Activated naive CD4-positive, alpha-beta T cell treated with anti-CD3 and anti-CD28 coated beads for 36 hours (primary cell): ENCODE measurements at regions of chr11 and their contacts with region 1.

Region 1: DNA sequence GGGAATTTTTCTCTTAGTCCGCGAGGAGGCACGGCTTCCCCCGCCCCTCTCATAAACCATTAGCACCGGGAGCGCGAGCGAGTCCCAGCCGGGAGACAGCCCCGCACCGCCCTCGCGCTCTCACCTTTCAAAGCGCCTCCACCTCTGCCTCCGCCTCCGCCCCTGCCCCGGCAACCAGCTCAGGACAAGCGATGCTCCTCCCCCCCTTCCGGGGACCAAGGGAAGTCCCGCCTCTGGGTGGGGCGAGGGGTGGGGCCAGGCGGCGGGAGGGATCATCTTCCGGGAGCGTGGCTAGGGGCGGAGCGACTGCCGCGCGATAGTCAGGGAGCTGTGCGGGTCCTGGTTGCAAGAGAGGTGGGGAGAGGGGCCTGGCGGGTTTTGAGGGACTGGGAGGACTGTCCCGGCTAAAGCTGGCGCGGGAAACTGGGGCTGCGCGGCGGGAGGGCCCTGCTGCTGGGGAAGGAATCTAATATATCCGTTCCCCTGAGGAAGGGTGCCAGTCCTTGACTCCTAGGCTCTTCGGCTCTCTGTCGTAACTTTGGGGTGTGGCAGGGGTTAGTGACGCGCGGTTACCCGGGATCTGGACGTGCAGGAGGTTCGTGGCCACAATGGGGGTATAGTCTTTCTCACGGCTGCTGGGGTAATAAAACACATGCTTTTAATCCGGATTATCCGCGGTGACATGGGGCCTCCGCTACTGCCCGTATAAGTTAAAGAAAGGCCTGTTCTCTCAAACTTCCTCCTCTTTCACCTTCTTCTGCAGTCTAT is at the starts of genes CCDC82 and JRKL:
- DNase-seq: peak; percentile 99
- H3K4me3 Mint-ChIP-seq: peak within 1 kb of the TSS; percentile 89
- H3K27ac Mint-ChIP-seq: peak within 1 kb of the TSS; percentile 91
- H3K4me1 Mint-ChIP-seq: peaks cover 58% of the 10 kb centered on the region
- H3K27me3 Mint-ChIP-seq: no peaks in the 10 kb centered on the region
- total RNA-seq, gene CCDC82: 32.0 to 34.0 TPM
- total RNA-seq, gene JRKL: 12.3 to 12.7 TPM

Region 2: GRCh38 chr11:95790123-95790932 is 599.6 kb before region 1 on chr11 and contains the start of gene CEP57:
- CTCF ChIA-PET with region 1: interaction called, 8 read pairs
- intact Hi-C with region 1: loop called (anchors 1 kb)
- DNase-seq: peak; percentile 98
- H3K4me3 Mint-ChIP-seq: peak within 1 kb of the TSS; percentile 99
- H3K27ac Mint-ChIP-seq: peak within 1 kb of the TSS; percentile 100
- H3K4me1 Mint-ChIP-seq: peaks cover 56% of the 10 kb centered on the region
- H3K27me3 Mint-ChIP-seq: no peaks in the 10 kb centered on the region
- total RNA-seq, gene CEP57: 110 to 115 TPM

Region 3: DNA sequence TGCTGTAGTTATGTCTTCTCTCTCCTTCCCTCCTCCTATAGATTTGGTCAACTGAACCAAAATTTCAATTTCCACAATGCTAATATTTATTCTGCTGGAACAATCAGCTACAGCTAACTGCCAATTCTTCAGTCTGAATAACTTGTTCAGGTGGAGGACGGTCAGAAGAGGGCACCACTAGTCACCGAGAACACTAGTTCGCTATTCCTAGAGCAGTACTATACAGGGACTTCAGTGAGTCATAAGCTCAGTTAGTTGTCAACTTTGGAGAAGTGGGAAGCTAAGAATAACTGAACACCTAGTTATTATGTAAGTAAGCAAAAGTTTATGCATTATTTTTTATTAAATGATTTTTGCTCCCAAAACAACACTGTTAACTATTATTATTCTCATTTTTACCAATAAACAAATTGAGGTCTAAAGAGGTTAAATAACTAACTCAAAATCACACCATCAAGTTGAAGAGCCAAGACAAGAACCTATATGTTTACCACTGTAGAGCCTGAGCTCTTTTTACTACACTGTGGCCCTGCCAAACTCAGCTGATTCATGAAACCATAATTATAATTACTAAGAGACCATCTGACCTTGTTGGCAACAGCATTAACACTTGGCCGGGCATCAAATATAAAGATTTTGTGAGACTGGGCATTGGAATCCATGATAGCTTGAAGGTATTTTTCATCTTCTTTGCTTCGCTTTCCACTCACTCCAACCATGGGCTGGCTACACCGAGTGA is 540.6 kb before region 1 on chr11:
- CTCF ChIA-PET with region 1: interaction called, 15 read pairs
- intact Hi-C with region 1: loop called (anchors 1 kb)
- DNase-seq: peak; percentile 65
- H3K4me3 Mint-ChIP-seq: no peak overlapping the region
- H3K27ac Mint-ChIP-seq: no peak overlapping the region
- H3K4me1 Mint-ChIP-seq: no peaks in the 10 kb centered on the region
- H3K27me3 Mint-ChIP-seq: no peaks in the 10 kb centered on the region

Region 4: GRCh38 chr11:96012086-96012824 is 377.6 kb before region 1 on chr11:
- CTCF ChIA-PET with region 1: interaction called, 4 read pairs
- intact Hi-C with region 1: loop called (anchors 1 kb)
- DNase-seq: peak; percentile 67
- H3K4me3 Mint-ChIP-seq: peak overlapping the region; percentile 52
- H3K27ac Mint-ChIP-seq: peak overlapping the region; percentile 72
- H3K4me1 Mint-ChIP-seq: peaks cover 69% of the 10 kb centered on the region
- H3K27me3 Mint-ChIP-seq: no peaks in the 10 kb centered on the region

Region 5: DNA sequence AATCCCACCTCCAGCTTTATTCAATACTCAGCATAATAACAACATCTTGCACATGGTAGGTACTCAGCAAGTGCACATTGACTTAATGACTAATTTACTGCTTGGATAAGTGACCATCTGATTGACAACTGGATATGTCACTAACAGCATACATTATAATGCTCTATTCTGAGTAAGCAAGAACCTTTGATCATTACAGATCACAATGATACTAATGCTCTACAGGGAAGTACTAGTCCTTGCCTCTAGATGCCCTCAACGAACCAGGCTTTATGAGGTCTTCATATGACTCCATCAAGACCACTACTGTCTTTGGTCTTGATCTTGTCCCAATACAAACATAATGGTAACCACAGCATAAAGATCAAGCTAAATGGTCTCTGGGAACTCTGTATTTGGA is 298.4 kb before region 1 on chr11:
- CTCF ChIA-PET with region 1: interaction called, 9 read pairs
- intact Hi-C with region 1: loop called (anchors 1 kb)
- DNase-seq: peak; percentile 26
- H3K4me3 Mint-ChIP-seq: no peak overlapping the region
- H3K27ac Mint-ChIP-seq: no peak overlapping the region
- H3K4me1 Mint-ChIP-seq: peaks cover 56% of the 10 kb centered on the region
- H3K27me3 Mint-ChIP-seq: no peaks in the 10 kb centered on the region

Region 6: GRCh38 chr11:96242971-96243647 is 146.8 kb before region 1 on chr11:
- CTCF ChIA-PET with region 1: interaction called, 5 read pairs
- intact Hi-C with region 1: loop called (anchors 1 kb)
- DNase-seq: peak; percentile 94
- H3K4me3 Mint-ChIP-seq: peak overlapping the region; percentile 84
- H3K27ac Mint-ChIP-seq: peak overlapping the region; percentile 95
- H3K4me1 Mint-ChIP-seq: peaks cover 54% of the 10 kb centered on the region
- H3K27me3 Mint-ChIP-seq: no peaks in the 10 kb centered on the region

Region 7: DNA sequence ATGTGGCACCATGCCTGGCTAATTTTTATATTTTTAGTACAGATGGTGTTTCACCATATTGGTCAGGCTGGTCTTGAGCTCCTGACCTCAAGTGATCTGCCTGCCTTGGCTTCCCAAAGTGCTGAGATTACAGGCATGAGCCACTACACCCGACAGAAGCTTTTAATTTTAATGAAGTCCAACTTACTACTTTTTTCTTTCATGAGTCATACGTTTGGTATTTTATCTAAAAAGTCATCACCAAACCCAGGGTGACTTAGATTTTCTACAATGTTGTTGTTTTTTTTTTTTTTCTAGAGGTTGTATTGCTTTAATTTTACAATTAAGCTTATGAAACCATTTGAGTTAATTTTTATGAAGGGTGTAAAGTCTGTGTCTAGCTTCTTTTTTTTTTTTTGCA is 34.8 kb after region 1 on chr11:
- CTCF ChIA-PET with region 1: interaction called, 14 read pairs
- intact Hi-C with region 1: loop called (anchors 2 kb)
- DNase-seq: no peak
- H3K4me3 Mint-ChIP-seq: no peak overlapping the region
- H3K27ac Mint-ChIP-seq: no peak overlapping the region
- H3K4me1 Mint-ChIP-seq: peaks cover 4% of the 10 kb centered on the region
- H3K27me3 Mint-ChIP-seq: peaks cover 17% of the 10 kb centered on the region